Activated CD4-positive, alpha-beta T cell treated with anti-CD3 and anti-CD28 coated beads for 36 hours (primary cell): ENCODE measurements at regions of chr7 and their contacts with region 1.

Region 1: DNA sequence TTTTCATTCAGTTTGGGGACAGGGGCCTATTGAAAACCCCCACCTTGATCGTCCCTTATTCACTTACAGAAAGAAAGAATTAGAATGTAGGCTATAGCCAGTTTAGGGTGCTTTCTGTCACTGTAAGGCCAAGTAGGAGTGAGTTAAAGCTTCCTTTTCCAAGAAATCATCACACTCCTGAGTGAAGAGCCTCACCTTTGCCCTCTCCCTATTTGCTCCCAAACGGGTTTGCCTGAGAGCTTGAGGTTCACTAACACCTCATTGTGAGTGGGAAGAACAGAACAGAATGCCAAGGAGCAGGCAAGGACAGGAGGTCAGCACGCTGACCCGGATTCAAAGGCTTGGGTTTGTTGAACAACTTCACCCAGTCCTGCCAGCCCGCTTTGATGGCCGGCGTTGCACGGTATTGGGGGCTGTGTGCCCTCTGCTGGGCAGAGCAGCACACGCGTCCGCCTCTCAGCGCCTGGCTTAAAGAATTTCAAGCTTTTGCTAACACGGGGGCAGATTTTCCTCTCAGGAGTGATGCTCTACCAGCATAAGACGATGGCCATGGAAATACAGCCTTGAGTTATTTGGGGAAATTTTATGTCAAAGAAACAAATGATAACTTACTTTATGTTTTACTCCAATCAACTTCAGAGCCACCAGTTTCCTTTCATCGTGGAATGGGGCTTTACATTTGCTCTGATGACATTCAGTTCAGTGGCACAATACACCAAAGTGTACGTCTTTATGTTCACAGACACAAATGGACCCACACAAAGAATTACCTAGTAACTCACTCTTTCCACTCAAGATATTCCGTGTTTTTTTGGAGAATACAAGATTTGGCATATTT is 470.0 kb downstream of the SUGCT start:
- DNase-seq: peak; percentile 56
- ATAC-seq: peak; percentile 53
- H3K4me3 Mint-ChIP-seq: no peak overlapping the region
- H3K27ac Mint-ChIP-seq: no peak overlapping the region
- H3K4me1 Mint-ChIP-seq: peaks cover 3% of the 10 kb centered on the region
- H3K27me3 Mint-ChIP-seq: no peaks in the 10 kb centered on the region

Region 2: GRCh38 chr7:40329601-40330153 is 275.1 kb before region 1 on chr7:
- CTCF ChIA-PET with region 1: interaction called, 3 read pairs
- POLR2A ChIA-PET with region 1: no interaction called
- intact Hi-C with region 1: loop called (anchors 1 kb)
- DNase-seq: no peak
- ATAC-seq: no peak
- H3K4me3 Mint-ChIP-seq: no peak overlapping the region
- H3K27ac Mint-ChIP-seq: no peak overlapping the region
- H3K4me1 Mint-ChIP-seq: no peaks in the 10 kb centered on the region
- H3K27me3 Mint-ChIP-seq: no peaks in the 10 kb centered on the region